ENCODE measurements at regions of chr12 and their contacts with region 1.

Region 1: GRCh38 chr12:56224102-56224701 is at the start of gene NABP2:
- DNase-seq: peak; percentile 88 to 93 (median 89)
- H3K4me3 ChIP-seq: peak within 1 kb of the TSS; percentile 28 to 79
- H3K4me3 Mint-ChIP-seq: peak within 1 kb of the TSS; percentile 83 to 99 (median 87)
- H3K27ac ChIP-seq: peak within 1 kb of the TSS; percentile 83
- H3K27ac Mint-ChIP-seq: peak within 1 kb of the TSS; percentile 90 to 100 (median 99)
- H3K4me1 ChIP-seq: peaks cover 42% of the 10 kb centered on the region
- H3K4me1 Mint-ChIP-seq: peaks cover 24 to 58% (median 43%) of the 10 kb centered on the region in 4 donors
- H3K27me3 ChIP-seq: no peaks in the 10 kb centered on the region
- H3K27me3 Mint-ChIP-seq: no peaks in the 10 kb centered on the region
- total RNA-seq, gene NABP2: 16.9 to 19.1 TPM

Region 2: GRCh38 chr12:56041552-56042429 is 182.4 kb before region 1 on chr12 and contains the start of gene RPS26:
- CTCF ChIA-PET with region 1: no interaction called
- POLR2A ChIA-PET with region 1: interaction called, 5 read pairs
- intact Hi-C with region 1: loop called (anchors 2 kb)
- DNase-seq: peak; percentile 95 to 98 (median 96)
- H3K4me3 ChIP-seq: peak within 1 kb of the TSS; percentile 94 to 97
- H3K4me3 Mint-ChIP-seq: peak within 1 kb of the TSS; percentile 98 to 100 (median 99)
- H3K27ac ChIP-seq: peak within 1 kb of the TSS; percentile 87
- H3K27ac Mint-ChIP-seq: peak within 1 kb of the TSS; percentile 96 to 100 (median 99)
- H3K4me1 ChIP-seq: peaks cover 23% of the 10 kb centered on the region
- H3K4me1 Mint-ChIP-seq: peaks cover 15 to 45% (median 23%) of the 10 kb centered on the region in 4 donors
- H3K27me3 ChIP-seq: no peaks in the 10 kb centered on the region
- H3K27me3 Mint-ChIP-seq: no peaks in the 10 kb centered on the region
- total RNA-seq, gene RPS26: 55.6 to 55.8 TPM

Region 3: DNA sequence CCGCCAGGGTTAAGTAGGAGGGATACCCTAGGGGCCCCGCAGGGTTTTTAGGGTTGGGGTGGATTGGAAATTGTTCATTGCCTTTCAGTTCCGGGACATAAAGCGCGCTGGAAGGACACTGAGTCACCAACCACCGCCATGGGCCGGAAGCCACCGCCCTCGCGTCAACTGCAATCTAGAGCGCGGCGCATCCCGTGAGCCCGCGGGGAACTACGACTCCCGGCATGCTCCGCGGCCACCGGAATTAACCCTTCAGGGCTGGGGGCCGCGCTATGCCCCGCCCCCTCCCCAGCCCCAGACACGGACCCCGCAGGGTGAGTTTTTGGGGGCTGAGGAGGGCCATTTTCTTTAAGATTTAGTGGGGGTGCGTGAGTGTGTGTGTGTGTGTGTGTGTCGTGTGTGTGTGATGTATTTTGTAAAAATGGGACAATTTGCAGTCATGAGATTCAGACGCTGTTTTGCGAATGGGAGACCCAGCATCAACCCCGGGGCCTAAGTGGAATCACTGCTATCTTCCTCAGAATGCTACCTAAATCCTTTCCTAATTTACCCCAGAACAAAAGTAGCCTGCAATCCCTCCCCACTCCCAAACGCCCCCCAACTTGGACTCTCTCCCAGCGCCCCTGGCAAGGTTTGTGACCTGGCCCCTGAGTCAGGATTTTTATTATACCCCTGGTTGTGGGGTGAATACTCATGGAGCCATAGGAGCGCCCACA is 71.7 kb before region 1 on chr12 and contains the start of gene MYL6B:
- CTCF ChIA-PET with region 1: interaction called, 5 read pairs
- POLR2A ChIA-PET with region 1: interaction called, 12 read pairs
- intact Hi-C with region 1: loop called (anchors 1 kb)
- DNase-seq: peak; percentile 87 to 94 (median 88)
- H3K4me3 ChIP-seq: peak within 1 kb of the TSS; percentile 66 to 91
- H3K4me3 Mint-ChIP-seq: peak within 1 kb of the TSS; percentile 91 to 96 (median 94)
- H3K27ac ChIP-seq: peak within 1 kb of the TSS; percentile 84
- H3K27ac Mint-ChIP-seq: peak within 1 kb of the TSS; percentile 93 to 99 (median 97)
- H3K4me1 ChIP-seq: peaks cover 35% of the 10 kb centered on the region
- H3K4me1 Mint-ChIP-seq: peaks cover 16 to 49% (median 28%) of the 10 kb centered on the region in 4 donors
- H3K27me3 ChIP-seq: no peaks in the 10 kb centered on the region
- H3K27me3 Mint-ChIP-seq: no peaks in the 10 kb centered on the region
- total RNA-seq, gene MYL6B: 2.6 to 3.4 TPM

Region 4: GRCh38 chr12:56258057-56258819 is 34.0 kb after region 1 on chr12 and contains the start of gene ANKRD52:
- CTCF ChIA-PET with region 1: interaction called, 12 read pairs
- POLR2A ChIA-PET with region 1: interaction called, 30 read pairs
- intact Hi-C with region 1: no loop called
- DNase-seq: peak; percentile 76 to 87 (median 82)
- H3K4me3 ChIP-seq: peak within 1 kb of the TSS; percentile 85 to 95
- H3K4me3 Mint-ChIP-seq: peak within 1 kb of the TSS; percentile 89 to 97 (median 92)
- H3K27ac ChIP-seq: peak within 1 kb of the TSS; percentile 81
- H3K27ac Mint-ChIP-seq: peak within 1 kb of the TSS; percentile 82 to 95 (median 91)
- H3K4me1 ChIP-seq: peaks cover 21% of the 10 kb centered on the region
- H3K4me1 Mint-ChIP-seq: peaks cover 13 to 31% (median 19%) of the 10 kb centered on the region in 4 donors
- H3K27me3 ChIP-seq: no peaks in the 10 kb centered on the region
- H3K27me3 Mint-ChIP-seq: no peaks in the 10 kb centered on the region
- total RNA-seq, gene ANKRD52: 44.1 to 44.5 TPM

Region 5: GRCh38 chr12:56359851-56360767 is 135.9 kb after region 1 on chr12 and contains the start of gene STAT2:
- CTCF ChIA-PET with region 1: interaction called, 3 read pairs
- POLR2A ChIA-PET with region 1: interaction called, 14 read pairs
- intact Hi-C with region 1: loop called (anchors 1 kb)
- DNase-seq: peak; percentile 99 to 100 (median 100)
- H3K4me3 ChIP-seq: peak within 1 kb of the TSS; percentile 78 to 97
- H3K4me3 Mint-ChIP-seq: peak within 1 kb of the TSS; percentile 92 to 98 (median 96)
- H3K27ac ChIP-seq: peak within 1 kb of the TSS; percentile 84
- H3K27ac Mint-ChIP-seq: peak within 1 kb of the TSS; percentile 89 to 98 (median 96)
- H3K4me1 ChIP-seq: peaks cover 29% of the 10 kb centered on the region
- H3K4me1 Mint-ChIP-seq: peaks cover 16 to 30% (median 21%) of the 10 kb centered on the region in 4 donors
- H3K27me3 ChIP-seq: no peaks in the 10 kb centered on the region
- H3K27me3 Mint-ChIP-seq: no peaks in the 10 kb centered on the region
- total RNA-seq, gene STAT2: 192 to 193 TPM

Region 6: GRCh38 chr12:56468216-56469006 is 244.2 kb after region 1 on chr12 and contains the start of gene SPRYD4:
- CTCF ChIA-PET with region 1: interaction called, 27 read pairs
- POLR2A ChIA-PET with region 1: interaction called, 17 read pairs
- intact Hi-C with region 1: loop called (anchors 1 kb)
- DNase-seq: peak; percentile 94 to 96 (median 95)
- H3K4me3 ChIP-seq: peak within 1 kb of the TSS; percentile 90 to 98
- H3K4me3 Mint-ChIP-seq: peak within 1 kb of the TSS; percentile 93 to 98 (median 96)
- H3K27ac ChIP-seq: peak within 1 kb of the TSS; percentile 73
- H3K27ac Mint-ChIP-seq: peak within 1 kb of the TSS; percentile 94 to 99 (median 98)
- H3K4me1 ChIP-seq: peaks cover 26% of the 10 kb centered on the region
- H3K4me1 Mint-ChIP-seq: peaks cover 14 to 44% (median 26%) of the 10 kb centered on the region in 4 donors
- H3K27me3 ChIP-seq: no peaks in the 10 kb centered on the region
- H3K27me3 Mint-ChIP-seq: no peaks in the 10 kb centered on the region
- total RNA-seq, gene SPRYD4: 6.5 to 6.9 TPM

Measured in CD4-positive, alpha-beta memory T cell (primary cell).